Left cardiac atrium (tissue), 4 donors: ENCODE measurements at regions of chr14 and their contacts with region 1.

Region 1: DNA sequence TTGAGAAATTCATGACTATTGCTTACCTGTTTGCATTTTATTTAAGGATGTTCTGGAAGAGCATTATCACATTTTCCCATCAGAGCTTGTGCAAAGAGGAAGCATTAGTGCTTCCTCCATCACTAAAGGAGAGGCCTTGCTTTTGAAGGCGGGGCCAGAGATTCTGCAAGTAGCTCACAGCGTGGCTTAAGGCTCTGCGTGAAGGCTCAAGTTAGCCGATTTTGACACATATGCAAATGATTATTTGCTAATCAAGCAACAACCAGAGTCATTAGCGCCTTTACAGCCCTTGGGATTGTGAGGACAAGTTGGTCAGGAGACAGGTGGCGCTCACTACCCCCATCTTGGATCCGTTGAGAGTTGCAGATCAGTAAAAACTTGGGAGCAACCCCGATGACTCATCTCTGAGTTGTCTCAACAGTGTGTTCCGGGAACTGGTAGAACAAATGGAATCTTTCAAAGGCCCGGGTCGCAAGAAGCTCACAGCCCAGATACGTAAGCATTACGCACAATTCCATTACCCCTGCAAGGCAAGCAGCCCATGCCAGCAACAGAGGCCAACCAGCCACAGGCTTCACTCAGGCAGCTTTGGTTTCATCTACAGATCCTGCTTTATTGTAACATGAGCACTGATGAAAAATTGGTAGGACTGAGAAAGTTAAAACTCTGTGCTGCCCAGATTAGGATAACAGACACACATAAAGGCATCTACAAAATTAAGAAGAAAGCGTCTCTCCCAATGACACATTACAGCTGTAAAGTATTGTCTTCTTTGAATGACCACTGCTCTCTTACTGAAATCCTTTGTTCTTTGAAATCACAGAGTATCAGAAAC is 34.9 kb upstream of the SPTSSA start:
- DNase-seq: peak; percentile 83
- ATAC-seq: peak; percentile 91 to 98

Region 2: GRCh38 chr14:34059855-34060638 is 436.8 kb before region 1 on chr14:
- intact Hi-C with region 1: no loop called
- DNase-seq: peak; percentile 86
- ATAC-seq: peak; percentile 96 to 98

Region 3: GRCh38 chr14:34331728-34332623 is 164.9 kb before region 1 on chr14:
- intact Hi-C with region 1: loop called in 1 of 2 experiments (anchors 10 kb)
- DNase-seq: peak; percentile 57
- ATAC-seq: peak; percentile 80 to 86

Region 4: GRCh38 chr14:34365309-34365915 is 131.5 kb before region 1 on chr14:
- intact Hi-C with region 1: loop called in 1 of 2 experiments (anchors 10 kb)
- DNase-seq: no peak
- ATAC-seq: no peak

Region 5: DNA sequence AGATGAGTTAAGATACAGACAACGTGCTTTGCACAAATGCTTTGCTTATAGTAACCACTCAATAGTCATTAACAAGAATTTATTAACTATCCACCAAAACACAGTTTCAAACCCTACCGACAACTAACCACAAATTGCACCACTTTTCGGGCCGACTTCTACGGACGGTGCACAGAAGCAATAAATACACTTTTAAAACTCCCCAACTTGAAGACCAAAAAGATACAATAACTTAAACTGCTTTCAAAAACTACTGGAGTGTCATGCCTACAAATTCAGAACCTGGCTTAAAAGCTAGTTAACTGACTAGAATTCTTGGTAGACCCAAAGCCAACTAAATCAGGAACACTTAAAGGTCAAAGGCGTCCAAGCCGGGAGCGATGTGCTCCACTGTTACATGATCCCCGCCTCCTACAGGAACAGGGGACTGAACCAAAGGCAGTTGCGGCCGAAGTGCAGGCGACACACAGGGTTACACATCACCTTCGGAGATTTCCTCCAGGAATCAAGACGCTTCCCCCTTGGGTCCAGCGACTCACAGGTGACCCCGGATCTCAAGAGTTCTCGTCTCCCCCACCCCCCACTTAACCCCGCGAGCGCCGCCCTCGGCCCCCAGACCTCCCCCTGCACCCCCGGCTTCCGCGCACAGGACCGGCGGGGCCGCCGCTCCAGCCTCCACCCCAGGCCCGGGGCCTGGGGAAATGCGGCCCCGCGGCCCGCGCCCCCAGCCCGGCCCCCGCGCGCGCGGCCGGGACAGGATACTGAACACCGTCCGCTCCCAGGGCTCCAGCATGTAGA is 35.4 kb before region 1 on chr14:
- intact Hi-C with region 1: no loop called
- DNase-seq: peak; percentile 52
- ATAC-seq: peak; percentile 43